Heart left ventricle (tissue), 16 donors: ENCODE measurements at regions of chr9 and their contacts with region 1.

Region 1: GRCh38 chr9:75866273-75866871 is 24.1 kb upstream of the PCSK5 start:
- DNase-seq: peak in 2 of 5 donors; percentile 23 to 44
- ATAC-seq: peak in 1 of 4 donors; percentile 36
- H3K4me3 ChIP-seq: no peak overlapping the region
- H3K27ac ChIP-seq: no peak overlapping the region
- H3K4me1 ChIP-seq: peaks cover 0 to 8% (median 0%) of the 10 kb centered on the region in 12 donors
- H3K27me3 ChIP-seq: no peaks in the 10 kb centered on the region
- CTCF ChIP-seq: peak; percentile 65 to 87 (median 82)
- POLR2A ChIP-seq: no peak

Region 2: GRCh38 chr9:75265525-75265972 is 600.8 kb before region 1 on chr9:
- intact Hi-C with region 1: loop called in 7 of 10 experiments (anchors 2 to 5 kb)
- DNase-seq: peak in 2 of 5 donors; percentile 8 to 37
- ATAC-seq: peak in 3 of 4 donors; percentile 66 to 74 (median 74)
- H3K4me3 ChIP-seq: no peak overlapping the region
- H3K27ac ChIP-seq: no peak overlapping the region
- H3K4me1 ChIP-seq: peaks cover 0 to 7% (median 0%) of the 10 kb centered on the region in 12 donors
- H3K27me3 ChIP-seq: no peaks in the 10 kb centered on the region
- CTCF ChIP-seq: peak; percentile 80 to 97 (median 90)
- POLR2A ChIP-seq: no peak

Region 3: GRCh38 chr9:75601279-75601678 is 265.1 kb before region 1 on chr9:
- intact Hi-C with region 1: loop called in 4 of 10 experiments (anchors 5 to 10 kb)
- DNase-seq: no peak
- ATAC-seq: no peak
- H3K4me3 ChIP-seq: no peak overlapping the region
- H3K27ac ChIP-seq: no peak overlapping the region
- H3K4me1 ChIP-seq: peaks cover 0 to 7% (median 0%) of the 10 kb centered on the region in 12 donors
- H3K27me3 ChIP-seq: no peaks in the 10 kb centered on the region
- CTCF ChIP-seq: peak in 7 of 12 donors; percentile 5 to 30 (median 15)
- POLR2A ChIP-seq: no peak

Region 4: GRCh38 chr9:75826314-75826713 is 40.1 kb before region 1 on chr9:
- intact Hi-C with region 1: no loop called
- DNase-seq: peak in 1 of 5 donors; percentile 23
- ATAC-seq: no peak
- H3K4me3 ChIP-seq: no peak overlapping the region
- H3K27ac ChIP-seq: no peak overlapping the region
- H3K4me1 ChIP-seq: peaks cover 0 to 14% (median 9%) of the 10 kb centered on the region in 12 donors
- H3K27me3 ChIP-seq: no peaks in the 10 kb centered on the region
- CTCF ChIP-seq: no peak
- POLR2A ChIP-seq: no peak

Region 5: GRCh38 chr9:75855509-75855908 is 10.9 kb before region 1 on chr9:
- intact Hi-C with region 1: no loop called
- DNase-seq: peak in 1 of 5 donors; percentile 7
- ATAC-seq: peak in 1 of 4 donors; percentile 51
- H3K4me3 ChIP-seq: no peak overlapping the region
- H3K27ac ChIP-seq: no peak overlapping the region
- H3K4me1 ChIP-seq: peaks cover 0 to 3% (median 0%) of the 10 kb centered on the region in 12 donors
- H3K27me3 ChIP-seq: no peaks in the 10 kb centered on the region
- CTCF ChIP-seq: peak; percentile 33 to 70 (median 52)
- POLR2A ChIP-seq: no peak

Region 6: GRCh38 chr9:75921391-75922127 is 55.2 kb after region 1 on chr9:
- intact Hi-C with region 1: loop called in 1 of 10 experiments (anchors 10 kb)
- DNase-seq: no peak
- ATAC-seq: no peak
- H3K4me3 ChIP-seq: no peak overlapping the region
- H3K27ac ChIP-seq: no peak overlapping the region
- H3K4me1 ChIP-seq: no peaks in the 10 kb centered on the region
- H3K27me3 ChIP-seq: no peaks in the 10 kb centered on the region
- CTCF ChIP-seq: no peak
- POLR2A ChIP-seq: no peak